ENCODE measurements at regions of chr7 and their contacts with region 1.

Region 1: GRCh38 chr7:87219545-87220025 is at the start of gene TMEM243:
- DNase-seq: peak; percentile 66 to 85 (median 77)
- H3K4me3 ChIP-seq: peak within 1 kb of the TSS; percentile 49 to 81 (median 72)
- H3K27ac ChIP-seq: peak within 1 kb of the TSS in 4 of 5 donors; percentile 71 to 88 (median 83)
- H3K4me1 ChIP-seq: peaks cover 13 to 27% of the 10 kb centered on the region in 2 donors
- H3K27me3 ChIP-seq: no peaks in the 10 kb centered on the region
- CTCF ChIP-seq: peak in 1 of 6 experiments; percentile 16
- POLR2A ChIP-seq: peak; percentile 60 to 68
- total RNA-seq, gene TMEM243: 13.7 to 63.4 (median 20.5) TPM

Region 2: GRCh38 chr7:86939197-86939814 is 280.3 kb before region 1 on chr7:
- intact Hi-C with region 1: loop called in 1 of 2 experiments (anchors 10 kb)
- DNase-seq: peak in 6 of 7 donors; percentile 36 to 68 (median 60)
- H3K4me3 ChIP-seq: no peak overlapping the region
- H3K27ac ChIP-seq: no peak overlapping the region
- H3K4me1 ChIP-seq: no peaks in the 10 kb centered on the region
- H3K27me3 ChIP-seq: no peaks in the 10 kb centered on the region
- CTCF ChIP-seq: peak; percentile 47 to 85 (median 76)
- POLR2A ChIP-seq: no peak

Region 3: GRCh38 chr7:87164433-87164832 is 55.2 kb before region 1 on chr7:
- intact Hi-C with region 1: loop called in 1 of 2 experiments (anchors 10 kb)
- DNase-seq: no peak
- H3K4me3 ChIP-seq: no peak overlapping the region
- H3K27ac ChIP-seq: no peak overlapping the region
- H3K4me1 ChIP-seq: no peaks in the 10 kb centered on the region
- H3K27me3 ChIP-seq: no peaks in the 10 kb centered on the region
- CTCF ChIP-seq: no peak
- POLR2A ChIP-seq: no peak

Measured in adrenal gland (tissue), 19 donors.